BJ (cell line): ENCODE measurements at regions of chr6 and their contacts with region 1.

Region 1: DNA sequence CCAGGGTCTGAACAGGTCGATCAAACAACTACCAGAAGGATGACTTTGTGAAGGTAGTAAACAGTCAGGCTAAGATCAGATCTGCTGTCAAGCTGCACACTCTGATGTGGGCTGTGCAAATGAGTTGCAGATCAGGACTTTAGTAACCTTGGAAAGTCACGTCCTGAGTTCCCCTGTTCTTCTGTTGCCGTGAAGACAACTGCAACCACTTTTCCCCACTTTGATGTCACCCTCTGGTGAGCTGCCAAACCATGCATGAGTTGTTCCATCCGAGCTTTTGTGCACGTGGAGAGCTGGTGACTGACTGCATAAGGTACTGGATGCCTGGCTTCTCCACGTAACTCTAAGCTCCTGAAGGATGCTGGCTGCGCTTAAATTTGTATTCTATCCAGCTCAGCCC is 111.0 kb downstream of the CD83 start:
- DNase-seq: peak; percentile 67
- H3K4me3 ChIP-seq: no peak overlapping the region
- H3K27me3 ChIP-seq: no peaks in the 10 kb centered on the region
- CTCF ChIP-seq: no peak

Region 2: DNA sequence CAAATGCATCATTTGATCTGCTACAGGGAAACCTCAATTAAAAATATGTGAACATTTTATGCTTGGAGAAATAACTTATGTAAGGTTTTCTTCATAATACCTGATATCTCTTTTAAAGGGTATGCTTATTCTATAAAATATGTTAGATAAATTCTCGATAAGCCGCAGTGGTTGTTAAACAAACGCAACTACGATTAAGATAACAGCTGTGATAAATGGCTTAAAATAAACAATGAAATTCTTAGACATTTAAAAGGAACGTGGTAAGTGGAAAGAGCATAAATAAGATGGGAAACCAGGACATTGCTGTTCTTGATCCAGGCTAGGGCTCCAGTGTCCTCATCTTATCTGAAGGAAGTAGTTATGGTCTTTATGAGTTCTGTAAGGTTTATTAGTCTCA is 304.9 kb after region 1 on chr6:
- CTCF ChIA-PET with region 1: no interaction called
- POLR2A ChIA-PET with region 1: interaction called, 15 read pairs
- DNase-seq: no peak
- H3K4me3 ChIP-seq: no peak overlapping the region
- H3K27me3 ChIP-seq: peaks cover 3% of the 10 kb centered on the region
- CTCF ChIP-seq: no peak

Region 3: GRCh38 chr6:14690120-14691056 is 461.8 kb after region 1 on chr6:
- CTCF ChIA-PET with region 1: no interaction called
- POLR2A ChIA-PET with region 1: interaction called, 24 read pairs
- DNase-seq: no peak
- H3K4me3 ChIP-seq: no peak overlapping the region
- H3K27me3 ChIP-seq: no peaks in the 10 kb centered on the region
- CTCF ChIP-seq: no peak